Naive thymus-derived CD4-positive, alpha-beta T cell (primary cell): ENCODE measurements at regions of chr2 and their contacts with region 1.

Region 1: GRCh38 chr2:11993749-11994148 is 247.3 kb downstream of the LPIN1 start:
- DNase-seq: no peak
- ATAC-seq: no peak
- H3K4me3 ChIP-seq: no peak overlapping the region
- H3K4me3 Mint-ChIP-seq: no peak overlapping the region
- H3K27ac ChIP-seq: no peak overlapping the region
- H3K27ac Mint-ChIP-seq: no peak overlapping the region
- H3K4me1 ChIP-seq: no peaks in the 10 kb centered on the region
- H3K4me1 Mint-ChIP-seq: peaks cover 0 to 12% (median 9%) of the 10 kb centered on the region in 7 donors
- H3K27me3 ChIP-seq: no peaks in the 10 kb centered on the region
- H3K27me3 Mint-ChIP-seq: peaks cover 0 to 28% (median 0%) of the 10 kb centered on the region in 5 donors

Region 2: GRCh38 chr2:11930211-11930761 is 63.5 kb before region 1 on chr2:
- CTCF ChIA-PET with region 1: no interaction called
- POLR2A ChIA-PET with region 1: no interaction called
- intact Hi-C with region 1: no loop called
- DNase-seq: no peak
- ATAC-seq: no peak
- H3K4me3 ChIP-seq: no peak overlapping the region
- H3K4me3 Mint-ChIP-seq: no peak overlapping the region
- H3K27ac ChIP-seq: no peak overlapping the region
- H3K27ac Mint-ChIP-seq: peak overlapping the region in 1 of 9 donors; percentile 44
- H3K4me1 ChIP-seq: no peaks in the 10 kb centered on the region
- H3K4me1 Mint-ChIP-seq: peaks cover 4 to 31% (median 26%) of the 10 kb centered on the region in 7 donors
- H3K27me3 ChIP-seq: no peaks in the 10 kb centered on the region
- H3K27me3 Mint-ChIP-seq: no peaks in the 10 kb centered on the region

Region 3: GRCh38 chr2:12032398-12032797 is 38.6 kb after region 1 on chr2:
- CTCF ChIA-PET with region 1: interaction called, 10 read pairs
- POLR2A ChIA-PET with region 1: no interaction called
- intact Hi-C with region 1: no loop called
- DNase-seq: no peak
- ATAC-seq: peak; percentile 29
- H3K4me3 ChIP-seq: no peak overlapping the region
- H3K4me3 Mint-ChIP-seq: no peak overlapping the region
- H3K27ac ChIP-seq: no peak overlapping the region
- H3K27ac Mint-ChIP-seq: no peak overlapping the region
- H3K4me1 ChIP-seq: peaks cover 12 to 20% of the 10 kb centered on the region in 2 donors
- H3K4me1 Mint-ChIP-seq: peaks cover 3 to 47% (median 33%) of the 10 kb centered on the region in 7 donors
- H3K27me3 ChIP-seq: no peaks in the 10 kb centered on the region
- H3K27me3 Mint-ChIP-seq: peaks cover 0 to 14% (median 0%) of the 10 kb centered on the region in 5 donors

Region 4: DNA sequence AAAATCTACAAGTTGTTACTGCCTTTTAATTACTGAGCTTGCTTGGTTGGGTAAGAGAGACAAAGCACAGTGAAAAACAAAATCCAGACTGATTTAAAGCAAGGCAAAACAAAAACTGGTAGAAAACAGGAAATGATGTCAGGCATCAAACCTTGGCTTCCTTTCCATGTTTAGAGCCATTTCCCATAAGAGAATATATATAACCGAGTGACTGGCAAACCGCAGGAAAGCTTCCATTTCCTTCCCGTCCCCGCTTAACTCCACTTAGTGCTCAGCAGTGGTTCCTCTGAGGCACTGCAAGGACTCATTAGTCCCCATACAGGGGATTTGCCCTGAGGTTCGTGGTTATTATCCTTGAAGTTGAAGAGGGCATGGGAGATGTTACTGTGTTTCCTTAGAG is 199.0 kb after region 1 on chr2:
- CTCF ChIA-PET with region 1: no interaction called
- POLR2A ChIA-PET with region 1: no interaction called
- intact Hi-C with region 1: no loop called
- DNase-seq: peak in 6 of 9 donors; percentile 14 to 51 (median 35)
- ATAC-seq: peak; percentile 61
- H3K4me3 ChIP-seq: peak overlapping the region; percentile 9
- H3K4me3 Mint-ChIP-seq: peak overlapping the region in 9 of 10 donors; percentile 0 to 67 (median 57)
- H3K27ac ChIP-seq: no peak overlapping the region
- H3K27ac Mint-ChIP-seq: peak overlapping the region; percentile 62 to 95 (median 85)
- H3K4me1 ChIP-seq: peaks cover 0 to 13% of the 10 kb centered on the region in 2 donors
- H3K4me1 Mint-ChIP-seq: peaks cover 12 to 26% (median 21%) of the 10 kb centered on the region in 7 donors
- H3K27me3 ChIP-seq: no peaks in the 10 kb centered on the region
- H3K27me3 Mint-ChIP-seq: peaks cover 0 to 6% (median 0%) of the 10 kb centered on the region in 5 donors